Activated T-helper 2 cell treated with anti-CD3 and anti-CD28 coated beads, Interferon-gamma antibody, Interleukin-2, Interleukin-4, amounts not matched to agents 10 μg/mL and 5 μg/mL and 100 μg/mL, durations not matched to agents 14 hours and 24 hours and 36 hours (primary cell): ENCODE measurements at regions of chr12 and their contacts with region 1.

Region 1: GRCh38 chr12:75658901-75659383 is 147.5 kb upstream of the KRR1 start:
- DNase-seq: peak; percentile 9
- H3K4me3 Mint-ChIP-seq: no peak overlapping the region
- H3K27ac Mint-ChIP-seq: peak overlapping the region; percentile 5
- H3K4me1 Mint-ChIP-seq: peaks cover 34% of the 10 kb centered on the region
- H3K27me3 Mint-ChIP-seq: peaks cover 6% of the 10 kb centered on the region

Region 2: DNA sequence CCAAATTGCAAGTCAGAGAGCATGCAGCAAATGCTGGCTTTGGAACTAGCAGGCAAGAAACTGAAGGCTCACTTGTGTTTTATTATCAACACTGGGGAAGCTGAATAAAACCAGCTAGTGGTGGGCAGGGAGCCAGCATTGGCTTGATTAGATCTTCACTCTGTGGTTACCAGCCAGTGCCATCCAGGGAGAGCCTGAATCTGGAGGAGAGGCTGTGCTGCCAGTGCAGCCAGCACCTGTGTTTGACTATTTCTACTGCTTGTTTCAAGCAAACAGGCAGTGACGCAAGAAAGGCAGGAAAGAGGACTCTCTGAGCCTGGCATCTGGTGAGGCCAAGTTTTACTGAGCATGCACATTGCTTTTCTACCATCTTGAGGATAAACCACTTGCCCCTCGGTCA is 125.6 kb after region 1 on chr12:
- intact Hi-C with region 1: loop called (anchors 5 kb)
- DNase-seq: no peak
- H3K4me3 Mint-ChIP-seq: no peak overlapping the region
- H3K27ac Mint-ChIP-seq: no peak overlapping the region
- H3K4me1 Mint-ChIP-seq: peaks cover 18% of the 10 kb centered on the region
- H3K27me3 Mint-ChIP-seq: peaks cover 6% of the 10 kb centered on the region